ENCODE measurements at regions of chr3 and their contacts with region 1.

Region 1: DNA sequence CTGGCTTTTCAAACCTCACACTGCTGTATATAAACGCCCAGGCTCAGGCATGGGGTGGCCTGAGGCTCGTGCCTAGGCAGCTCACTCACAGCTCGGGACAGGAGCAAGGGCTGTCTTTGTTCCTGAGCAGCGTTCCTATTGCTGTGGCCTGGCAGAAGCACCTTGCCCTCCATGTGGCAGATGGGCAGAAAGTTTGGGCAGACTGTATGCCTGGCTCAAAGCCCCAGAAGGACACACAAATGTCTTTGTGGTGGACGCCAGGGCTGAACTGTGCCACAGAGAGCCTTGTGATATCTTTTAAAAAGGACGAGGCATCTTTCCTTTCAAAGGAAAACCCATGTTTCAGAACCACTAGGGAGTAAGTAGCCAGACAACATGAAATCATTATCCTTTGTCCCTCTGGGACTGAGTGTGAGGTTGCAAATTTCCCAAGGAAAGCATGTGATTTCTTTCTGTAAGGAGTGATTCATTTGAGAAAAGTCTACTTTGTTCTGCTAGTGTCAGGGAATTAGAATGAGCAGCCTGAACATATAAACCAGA is 29.3 kb upstream of the UBE2E1 start:
- DNase-seq: peak; percentile 54
- H3K4me3 ChIP-seq: no peak overlapping the region
- H3K27me3 ChIP-seq: no peaks in the 10 kb centered on the region
- CTCF ChIP-seq: no peak

Region 2: GRCh38 chr3:23312866-23313265 is 463.6 kb before region 1 on chr3:
- CTCF ChIA-PET with region 1: no interaction called
- POLR2A ChIA-PET with region 1: interaction called, 12 read pairs
- DNase-seq: no peak
- H3K4me3 ChIP-seq: no peak overlapping the region
- H3K27me3 ChIP-seq: no peaks in the 10 kb centered on the region
- CTCF ChIP-seq: no peak

Region 3: DNA sequence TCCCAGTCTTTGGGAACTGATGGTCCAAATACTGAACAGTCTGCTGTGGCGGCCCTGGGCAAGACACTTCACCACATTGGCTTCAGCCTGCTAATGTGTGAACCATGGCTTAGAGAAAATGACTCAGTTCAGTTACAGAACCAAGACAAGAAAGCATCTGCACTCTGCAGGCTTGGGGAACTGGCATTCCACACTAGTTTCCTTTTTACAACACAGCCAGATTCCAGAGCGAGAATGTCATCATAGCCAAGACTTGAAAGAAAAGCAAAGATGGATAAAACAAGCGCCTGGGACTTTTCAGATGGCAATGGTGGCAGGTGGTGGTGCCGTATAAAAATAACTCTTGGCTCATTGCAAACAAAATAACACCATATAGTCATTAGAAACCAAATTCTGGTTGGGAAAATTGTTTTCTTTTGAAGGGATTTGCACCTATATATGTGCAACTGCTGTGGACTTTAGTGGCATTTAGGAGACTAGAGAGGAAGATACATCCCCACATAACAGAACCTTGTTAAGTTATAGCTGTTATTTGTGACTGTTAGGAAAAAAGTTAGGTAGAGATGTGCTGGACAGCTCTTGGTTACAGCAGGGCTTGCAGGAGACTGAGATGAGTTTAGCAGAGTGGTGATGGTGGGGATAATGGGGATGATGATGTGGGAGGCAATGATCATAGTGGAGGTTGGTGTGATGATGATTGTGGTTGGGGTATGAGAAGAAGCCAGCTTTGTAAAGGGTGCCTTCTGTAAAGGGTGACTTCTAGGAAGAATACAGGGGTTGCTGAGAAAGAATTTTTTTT is 444.6 kb after region 1 on chr3:
- CTCF ChIA-PET with region 1: no interaction called
- POLR2A ChIA-PET with region 1: no interaction called
- DNase-seq: peak; percentile 93
- H3K4me3 ChIP-seq: no peak overlapping the region
- H3K27me3 ChIP-seq: 0 out of 2 replicates have a peak, but pooled peaks cover under 1% of the 10 kb centered on the region
- CTCF ChIP-seq: no peak